ENCODE measurements at regions of chr13 and their contacts with region 1.

Region 1: DNA sequence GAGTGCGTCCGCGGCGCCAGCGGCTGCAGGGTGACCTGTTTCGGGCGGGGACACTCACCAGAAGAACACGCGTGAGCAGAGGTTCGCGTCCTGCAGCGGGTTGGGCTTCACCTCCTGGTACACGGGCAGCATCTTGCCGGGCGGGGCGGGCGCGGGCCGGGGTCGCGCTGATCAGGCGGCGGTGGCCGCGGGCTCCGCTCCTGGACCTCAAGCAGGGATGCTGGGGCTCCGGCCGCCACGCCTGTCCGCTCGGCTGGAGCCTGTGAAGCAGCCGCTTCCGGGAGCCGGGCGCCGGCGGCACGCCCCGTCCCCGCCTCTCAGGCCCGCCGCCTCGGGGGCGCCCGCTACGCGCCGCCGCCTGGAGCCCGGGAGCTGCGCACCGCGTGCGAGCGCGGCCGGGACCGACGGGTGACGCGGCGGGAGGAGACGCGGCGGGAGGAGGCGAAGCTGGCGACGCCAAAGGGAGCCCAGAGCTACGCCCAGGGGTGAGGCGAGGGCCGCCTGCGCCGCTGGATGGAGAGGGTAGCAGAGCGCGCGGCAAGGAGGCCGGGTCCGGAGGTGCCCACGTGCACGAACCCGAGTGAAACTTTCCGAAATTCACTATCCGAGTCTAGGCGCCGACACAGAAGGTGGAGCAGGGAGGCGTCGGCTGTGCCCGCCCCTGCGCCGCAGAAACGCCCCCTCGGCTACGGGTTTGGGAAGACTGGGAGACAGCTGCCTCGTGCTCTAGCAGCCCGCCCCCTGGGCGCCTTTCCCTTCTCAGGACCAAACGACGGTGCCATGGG is at the start of gene ABCC4:
- DNase-seq: peak; percentile 73
- H3K4me3 ChIP-seq: peak within 1 kb of the TSS; percentile 65
- H3K27ac ChIP-seq: peak within 1 kb of the TSS; percentile 64
- H3K4me1 ChIP-seq: peaks cover 11% of the 10 kb centered on the region
- H3K27me3 ChIP-seq: no peaks in the 10 kb centered on the region
- CTCF ChIP-seq: no peak
- total RNA-seq, gene ABCC4: 11.4 to 14.7 TPM

Region 2: GRCh38 chr13:95128045-95128643 is 173.2 kb before region 1 on chr13:
- intact Hi-C with region 1: no loop called
- DNase-seq: no peak
- H3K4me3 ChIP-seq: no peak overlapping the region
- H3K27ac ChIP-seq: no peak overlapping the region
- H3K4me1 ChIP-seq: no peaks in the 10 kb centered on the region
- H3K27me3 ChIP-seq: no peaks in the 10 kb centered on the region
- CTCF ChIP-seq: no peak

Region 3: GRCh38 chr13:95382411-95382810 is 81.0 kb after region 1 on chr13:
- intact Hi-C with region 1: loop called (anchors 5 kb)
- DNase-seq: no peak
- H3K4me3 ChIP-seq: no peak overlapping the region
- H3K27ac ChIP-seq: no peak overlapping the region
- H3K4me1 ChIP-seq: no peaks in the 10 kb centered on the region
- H3K27me3 ChIP-seq: no peaks in the 10 kb centered on the region
- CTCF ChIP-seq: no peak

Region 4: DNA sequence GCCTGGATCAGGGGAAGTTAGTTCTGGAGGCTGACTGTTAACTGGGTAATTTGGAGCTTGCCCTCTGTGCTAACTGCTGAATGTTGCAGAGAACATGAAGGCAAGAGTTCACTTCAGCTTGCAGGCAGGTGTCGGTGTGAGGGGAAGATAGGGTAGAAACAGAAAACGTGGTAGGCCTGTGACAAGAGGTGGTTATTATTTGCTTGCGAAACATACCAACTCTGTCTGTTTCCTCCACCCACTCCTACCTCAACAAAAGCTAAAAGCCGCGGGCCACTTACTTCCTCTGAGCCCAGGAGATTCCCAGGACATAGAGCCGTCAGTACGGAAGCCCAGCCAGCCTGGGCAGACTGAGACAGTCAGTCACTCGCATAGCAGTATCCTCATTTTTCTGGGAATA is 119.1 kb after region 1 on chr13:
- intact Hi-C with region 1: no loop called
- DNase-seq: no peak
- H3K4me3 ChIP-seq: no peak overlapping the region
- H3K27ac ChIP-seq: no peak overlapping the region
- H3K4me1 ChIP-seq: no peaks in the 10 kb centered on the region
- H3K27me3 ChIP-seq: no peaks in the 10 kb centered on the region
- CTCF ChIP-seq: no peak

Measured in colonic mucosa (tissue), 4 donors.